Natural killer cell (primary cell): ENCODE measurements at regions of chr4 and their contacts with region 1.

Region 1: DNA sequence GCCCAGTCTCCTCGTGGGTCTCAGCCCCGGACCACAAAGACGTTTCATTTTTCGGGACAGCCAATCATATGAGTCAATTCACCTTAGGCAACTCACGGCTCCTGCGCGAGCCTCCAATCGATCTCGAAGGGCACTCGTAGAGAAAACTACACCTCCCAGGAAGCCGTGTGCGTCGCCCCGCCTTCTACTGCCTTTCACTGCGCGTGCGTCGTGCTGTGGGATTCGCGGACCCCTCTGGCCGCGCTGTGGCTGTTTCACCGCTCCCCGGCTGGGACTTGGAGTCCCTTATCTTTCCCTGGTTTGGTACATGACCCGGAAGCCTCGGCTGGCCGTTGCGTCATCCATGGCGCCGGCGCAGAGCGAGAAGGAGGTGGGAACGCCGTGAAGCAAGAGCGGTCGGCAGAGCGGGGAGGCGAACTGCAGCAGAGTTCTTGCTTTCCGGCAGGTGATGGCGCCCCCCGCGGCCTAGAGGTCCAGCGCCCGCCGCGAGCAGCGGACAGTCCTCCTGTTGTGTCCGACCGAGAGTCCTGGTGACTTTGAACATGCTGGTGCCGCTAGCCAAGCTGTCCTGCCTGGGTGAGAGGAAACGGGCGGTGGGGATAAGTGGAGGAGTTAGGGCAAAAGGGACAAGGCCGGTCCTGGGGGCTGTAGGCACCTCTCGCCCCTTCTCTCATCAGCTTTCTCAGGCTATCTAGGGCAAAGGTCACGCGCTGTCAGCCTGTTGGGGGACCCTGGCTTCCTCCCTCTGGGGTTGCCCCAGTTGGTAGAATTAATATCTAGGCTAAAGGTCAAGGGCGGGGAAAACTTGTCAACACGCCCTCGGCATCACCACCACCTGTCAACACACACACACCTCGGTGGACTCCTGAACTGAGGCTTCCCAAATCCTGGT is at the start of gene ETFDH:
- DNase-seq: peak; percentile 95 to 100
- ATAC-seq: peak; percentile 81 to 91 (median 84)
- H3K4me3 ChIP-seq: peak within 1 kb of the TSS; percentile 69
- H3K4me3 Mint-ChIP-seq: peak within 1 kb of the TSS; percentile 97
- H3K27ac ChIP-seq: peak within 1 kb of the TSS; percentile 98
- H3K27ac Mint-ChIP-seq: peak within 1 kb of the TSS; percentile 93 to 99
- H3K4me1 ChIP-seq: peaks cover 16% of the 10 kb centered on the region
- H3K4me1 Mint-ChIP-seq: peaks cover 19 to 25% of the 10 kb centered on the region in 2 donors
- H3K27me3 ChIP-seq: no peaks in the 10 kb centered on the region
- H3K27me3 Mint-ChIP-seq: no peaks in the 10 kb centered on the region
- CTCF ChIP-seq: peak; percentile 50
- total RNA-seq, gene ETFDH: 20.3 to 36.7 (median 22.2) TPM

Region 2: DNA sequence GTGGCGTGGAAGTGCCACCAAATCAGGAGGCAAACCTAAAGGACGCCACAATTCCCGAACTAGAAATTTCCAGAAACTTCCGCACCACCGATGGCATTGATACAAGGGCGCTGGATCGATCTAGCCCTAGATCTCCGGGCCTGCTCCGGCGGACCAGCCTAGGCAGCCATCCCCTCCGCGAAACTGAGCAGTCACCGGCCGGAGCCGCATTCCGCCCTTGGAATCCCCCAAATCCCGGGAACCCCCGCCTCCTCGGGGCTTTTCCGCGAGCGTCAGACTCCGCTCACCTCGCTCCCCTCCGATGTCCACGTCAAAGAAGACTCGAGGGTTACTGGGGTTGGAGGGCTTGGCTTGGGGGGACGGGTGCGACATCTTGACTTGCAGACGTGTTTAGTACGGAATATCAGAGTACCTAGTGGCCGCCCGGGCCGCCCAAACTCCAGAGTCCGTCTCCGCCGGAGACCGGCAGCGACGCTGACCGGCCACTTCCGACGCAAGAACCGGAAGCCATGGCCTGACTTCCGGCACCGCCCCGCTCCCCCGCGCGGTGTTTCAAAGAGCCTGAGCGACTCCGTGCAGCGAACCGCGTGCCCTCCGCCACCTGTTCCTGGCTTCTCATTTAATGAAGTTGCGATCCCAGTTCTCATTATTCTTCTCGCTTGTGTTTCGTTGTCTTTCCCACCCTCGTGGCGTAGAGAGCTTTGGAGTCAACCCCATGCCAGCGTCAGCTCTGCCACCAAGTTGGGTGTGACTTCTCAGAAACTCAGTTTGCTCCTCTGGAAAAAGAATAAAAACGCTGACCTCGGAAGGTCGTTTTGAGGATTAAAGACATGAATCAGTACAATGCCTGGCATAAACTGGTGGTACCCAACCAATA is 51.0 kb after region 1 on chr4 and contains the start of gene PPID:
- intact Hi-C with region 1: loop called (anchors 2 kb)
- DNase-seq: peak; percentile 79 to 89
- ATAC-seq: peak; percentile 84 to 90 (median 86)
- H3K4me3 ChIP-seq: peak within 1 kb of the TSS; percentile 76
- H3K4me3 Mint-ChIP-seq: peak within 1 kb of the TSS; percentile 99
- H3K27ac ChIP-seq: peak within 1 kb of the TSS; percentile 87
- H3K27ac Mint-ChIP-seq: peak within 1 kb of the TSS; percentile 97 to 99
- H3K4me1 ChIP-seq: peaks cover 16% of the 10 kb centered on the region
- H3K4me1 Mint-ChIP-seq: peaks cover 34 to 42% of the 10 kb centered on the region in 2 donors
- H3K27me3 ChIP-seq: peaks cover 4% of the 10 kb centered on the region
- H3K27me3 Mint-ChIP-seq: peaks cover 3 to 11% of the 10 kb centered on the region in 2 donors
- CTCF ChIP-seq: no peak
- total RNA-seq, gene PPID: 21.5 to 30.7 (median 21.8) TPM

Region 3: DNA sequence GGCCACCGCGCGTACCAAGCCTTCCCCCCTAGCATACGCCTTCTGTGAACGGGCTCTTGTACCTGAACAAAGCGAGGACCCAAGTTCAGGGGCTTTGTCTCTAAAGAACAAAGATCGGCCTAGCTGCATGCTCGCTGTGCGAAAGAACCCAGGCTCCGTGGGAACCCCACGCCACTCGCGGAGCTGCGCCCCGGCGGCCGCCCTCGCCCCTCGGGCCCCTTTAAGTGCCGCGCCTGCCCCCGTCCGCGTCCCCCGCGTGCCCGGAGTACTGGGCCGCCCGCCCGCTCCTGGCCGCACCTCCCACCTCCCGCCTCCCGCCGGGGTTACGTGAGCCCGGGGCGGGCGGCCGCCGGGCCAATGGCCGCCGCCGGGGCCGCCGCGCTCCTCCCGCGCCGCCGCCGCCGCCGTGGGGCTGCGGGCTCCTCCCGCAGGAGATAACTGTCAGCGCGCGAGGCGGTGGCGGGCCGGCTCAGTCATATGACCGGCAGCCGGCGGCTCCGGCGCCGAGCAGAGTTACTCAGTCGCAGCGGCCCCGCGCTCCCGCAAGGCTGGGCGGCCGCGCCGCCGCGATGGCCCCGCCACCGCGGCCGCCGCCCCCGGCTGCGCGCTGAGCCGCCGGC is 96.5 kb after region 1 on chr4 and contains the start of gene FNIP2:
- intact Hi-C with region 1: loop called (anchors 2 kb)
- DNase-seq: peak; percentile 74 to 85
- ATAC-seq: peak; percentile 82 to 90 (median 86)
- H3K4me3 ChIP-seq: peak within 1 kb of the TSS; percentile 50
- H3K4me3 Mint-ChIP-seq: peak within 1 kb of the TSS; percentile 99
- H3K27ac ChIP-seq: peak within 1 kb of the TSS; percentile 80
- H3K27ac Mint-ChIP-seq: peak within 1 kb of the TSS; percentile 91 to 92
- H3K4me1 ChIP-seq: peaks cover 8% of the 10 kb centered on the region
- H3K4me1 Mint-ChIP-seq: peaks cover 29 to 32% of the 10 kb centered on the region in 2 donors
- H3K27me3 ChIP-seq: no peaks in the 10 kb centered on the region
- H3K27me3 Mint-ChIP-seq: no peaks in the 10 kb centered on the region
- CTCF ChIP-seq: no peak
- total RNA-seq, gene FNIP2: 19.4 to 22.6 (median 21.8) TPM

Region 4: DNA sequence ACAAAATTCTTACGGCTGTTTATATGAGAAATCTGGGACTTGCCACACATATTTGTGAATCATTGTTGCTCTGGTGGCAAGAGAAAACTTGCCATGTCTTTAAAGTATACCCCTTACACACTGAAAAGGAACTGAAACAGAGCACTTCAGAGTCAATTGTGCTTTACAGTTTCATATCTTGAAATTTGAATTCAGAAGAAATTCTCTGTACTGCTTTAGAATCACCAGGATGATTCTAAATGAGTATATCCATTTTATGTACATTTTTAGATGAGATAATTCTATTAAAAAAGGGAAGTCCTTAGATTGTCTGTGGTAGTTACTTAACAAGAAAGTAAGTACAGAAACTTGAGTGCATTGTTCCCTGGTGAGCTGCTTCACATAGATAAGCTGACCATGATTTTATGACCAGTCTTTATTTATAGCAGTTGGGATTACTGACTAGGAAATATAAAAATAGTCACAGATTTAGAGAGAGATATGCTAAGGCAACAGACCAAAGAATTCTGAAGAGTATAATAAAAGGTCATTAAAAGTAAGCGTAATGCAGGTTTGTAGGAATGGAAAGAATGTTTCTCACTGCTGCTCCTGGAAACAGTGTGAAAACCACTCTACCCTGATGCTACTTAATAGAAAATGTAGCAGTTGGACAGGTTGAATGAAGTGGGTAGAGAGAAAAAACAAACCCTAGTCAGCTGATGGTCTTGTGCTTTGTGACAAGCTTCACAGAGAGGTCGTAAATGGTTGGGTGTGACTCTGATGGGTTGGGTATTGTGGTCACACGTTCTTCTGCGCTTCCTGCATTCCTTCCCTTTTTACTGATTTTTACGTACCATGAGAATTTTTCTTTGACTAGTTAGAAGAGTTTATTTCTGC is 137.7 kb after region 1 on chr4:
- intact Hi-C with region 1: loop called (anchors 5 kb)
- DNase-seq: peak in 1 of 2 donors; percentile 57
- ATAC-seq: peak; percentile 83 to 91 (median 87)
- H3K4me3 ChIP-seq: no peak overlapping the region
- H3K4me3 Mint-ChIP-seq: peak overlapping the region; percentile 82
- H3K27ac ChIP-seq: peak overlapping the region; percentile 36
- H3K27ac Mint-ChIP-seq: peak overlapping the region; percentile 88 to 89
- H3K4me1 ChIP-seq: peaks cover 12% of the 10 kb centered on the region
- H3K4me1 Mint-ChIP-seq: peaks cover 46 to 70% of the 10 kb centered on the region in 2 donors
- H3K27me3 ChIP-seq: no peaks in the 10 kb centered on the region
- H3K27me3 Mint-ChIP-seq: no peaks in the 10 kb centered on the region
- CTCF ChIP-seq: no peak

Region 5: DNA sequence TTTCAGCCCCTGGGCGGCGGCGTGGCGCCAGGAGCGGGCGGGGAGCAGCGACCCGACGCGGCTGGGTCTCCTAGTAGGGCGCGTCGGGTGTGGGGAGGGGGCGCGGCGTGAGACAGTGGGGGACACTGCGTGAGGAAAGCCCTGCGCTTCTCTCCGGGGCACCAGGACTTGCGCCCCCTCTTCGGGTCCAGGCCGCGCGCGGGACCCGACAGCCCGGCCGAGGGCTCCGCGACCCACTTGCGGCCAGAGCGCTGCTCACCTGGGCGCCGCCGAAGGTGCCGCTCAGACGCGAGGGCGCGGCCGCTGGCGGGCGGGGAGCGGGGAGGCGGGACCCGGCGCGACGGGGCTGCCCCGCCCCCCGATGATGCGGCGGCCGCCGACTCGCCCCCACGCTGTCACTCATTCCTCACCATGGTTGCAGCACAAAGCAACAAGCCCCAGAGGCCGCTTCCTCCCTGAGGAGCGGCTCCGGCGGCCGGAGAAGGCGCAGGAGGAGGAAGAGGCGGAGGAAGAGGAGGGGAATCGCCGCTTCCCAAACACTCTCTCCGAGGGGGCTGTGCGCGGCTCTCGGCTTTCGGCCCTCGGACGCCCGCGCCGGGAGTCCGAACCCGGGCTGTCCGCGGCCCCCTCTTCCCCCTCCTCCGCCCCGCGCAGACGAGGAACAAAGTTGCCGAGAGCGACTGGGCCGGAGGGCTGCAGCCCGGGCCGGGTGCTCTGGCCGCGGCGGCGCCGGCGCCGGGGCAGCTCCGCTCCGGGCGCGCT is 430.6 kb after region 1 on chr4 and contains the start of gene RAPGEF2:
- intact Hi-C with region 1: loop called (anchors 1 kb)
- DNase-seq: peak; percentile 79 to 94
- ATAC-seq: peak; percentile 86 to 95 (median 90)
- H3K4me3 ChIP-seq: peak within 1 kb of the TSS; percentile 97
- H3K4me3 Mint-ChIP-seq: peak within 1 kb of the TSS; percentile 92
- H3K27ac ChIP-seq: peak within 1 kb of the TSS; percentile 91
- H3K27ac Mint-ChIP-seq: peak within 1 kb of the TSS; percentile 79 to 96
- H3K4me1 ChIP-seq: peaks cover 19% of the 10 kb centered on the region
- H3K4me1 Mint-ChIP-seq: peaks cover 30 to 38% of the 10 kb centered on the region in 2 donors
- H3K27me3 ChIP-seq: no peaks in the 10 kb centered on the region
- H3K27me3 Mint-ChIP-seq: peaks cover 0 to 11% of the 10 kb centered on the region in 2 donors
- CTCF ChIP-seq: no peak
- total RNA-seq, gene RAPGEF2: 21.9 to 55.6 (median 27.6) TPM

Region 6: DNA sequence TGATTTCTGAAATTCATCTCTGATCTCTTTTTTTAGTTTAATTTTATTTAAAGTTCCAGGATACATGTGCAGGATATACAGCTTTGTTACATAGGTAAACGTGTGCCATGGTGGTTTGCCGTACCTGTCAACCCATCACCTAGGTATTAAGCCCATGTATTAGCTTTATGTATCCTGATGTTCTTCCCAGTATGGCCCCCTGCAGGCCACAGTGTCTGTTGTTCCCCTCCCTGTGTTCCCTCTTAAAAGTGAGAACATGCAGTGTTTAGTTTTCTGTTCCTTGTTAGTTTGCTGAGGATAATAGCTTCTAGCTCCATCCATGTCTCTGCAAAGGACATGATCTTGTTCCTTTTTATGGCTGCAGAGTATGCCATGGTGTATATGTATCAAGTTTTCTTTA is 583.9 kb after region 1 on chr4:
- intact Hi-C with region 1: no loop called
- DNase-seq: no peak
- ATAC-seq: no peak
- H3K4me3 ChIP-seq: no peak overlapping the region
- H3K4me3 Mint-ChIP-seq: no peak overlapping the region
- H3K27ac ChIP-seq: no peak overlapping the region
- H3K27ac Mint-ChIP-seq: peak overlapping the region in 1 of 2 donors; percentile 39
- H3K4me1 ChIP-seq: peaks cover 3% of the 10 kb centered on the region
- H3K4me1 Mint-ChIP-seq: peaks cover 15 to 23% of the 10 kb centered on the region in 2 donors
- H3K27me3 ChIP-seq: no peaks in the 10 kb centered on the region
- H3K27me3 Mint-ChIP-seq: no peaks in the 10 kb centered on the region
- CTCF ChIP-seq: no peak